Activated T-helper 1 cell treated with anti-CD3 and anti-CD28 coated beads, Interleukin-12 subunit alpha, Interleukin-12 subunit beta, Interleukin-2, Interleukin-4 antibody, amounts not matched to agents 30 ng/mL and 10 ng/mL and 1 ng/mL, durations not matched to agents 14 hours and 24 hours and 36 hours (primary cell): ENCODE measurements at regions of chr12 and their contacts with region 1.

Region 1: DNA sequence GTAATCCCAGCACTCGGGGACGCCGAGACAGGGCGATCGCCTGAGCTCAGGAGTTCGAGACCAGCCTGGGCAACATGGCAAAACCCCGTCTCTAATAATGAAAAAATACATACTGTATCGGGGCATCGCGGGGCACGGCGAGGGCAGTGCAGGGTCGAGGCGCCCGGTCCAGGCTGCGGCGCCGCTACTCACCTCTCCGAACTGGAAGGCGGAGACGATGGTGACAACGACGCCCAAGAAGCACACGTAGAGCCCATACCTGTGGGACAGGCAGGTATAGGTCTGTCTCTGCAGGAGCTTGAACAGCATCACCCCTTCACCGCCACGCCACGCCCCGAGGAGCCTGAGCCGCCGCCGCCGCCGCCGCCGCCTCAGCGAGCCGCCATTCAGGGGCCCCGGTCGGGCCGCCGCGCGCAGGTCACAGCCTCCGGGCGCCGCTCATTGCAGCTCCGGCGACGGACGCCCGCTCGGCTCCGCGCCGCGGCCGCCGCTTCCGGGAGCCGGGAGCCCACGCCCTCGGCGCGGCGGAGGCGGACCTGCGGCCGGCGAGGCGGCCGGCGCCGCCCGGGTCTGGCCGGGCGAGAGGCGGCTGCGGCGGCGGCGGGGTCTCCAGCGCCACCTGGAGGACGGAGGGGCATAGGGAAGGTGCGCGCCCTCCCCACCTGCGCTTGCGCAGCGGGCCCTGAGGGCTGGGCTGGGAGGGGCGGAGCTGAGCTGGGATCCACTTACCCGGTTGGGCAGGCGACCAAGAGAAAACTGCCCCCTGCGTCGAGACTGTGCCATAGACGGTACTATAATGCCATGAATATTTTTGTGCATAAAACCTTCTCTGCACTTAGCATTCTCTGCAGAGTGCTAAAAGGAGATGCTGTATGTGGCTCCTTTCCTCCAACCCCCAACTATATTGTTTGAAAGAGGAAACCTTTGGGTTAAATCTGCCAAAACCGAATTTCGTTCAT is at the start of gene GNPTAB:
- DNase-seq: peak; percentile 91
- H3K4me3 Mint-ChIP-seq: peak within 1 kb of the TSS; percentile 94
- H3K27ac Mint-ChIP-seq: peak within 1 kb of the TSS; percentile 84
- H3K4me1 Mint-ChIP-seq: peaks cover 40% of the 10 kb centered on the region
- H3K27me3 Mint-ChIP-seq: no peaks in the 10 kb centered on the region
- total RNA-seq, gene GNPTAB: 53.2 and 55.0 TPM in 2 replicates

Region 2: GRCh38 chr12:101407436-101408345 is 423.0 kb before region 1 on chr12 and contains the start of gene ARL1:
- intact Hi-C with region 1: loop called (anchors 2 kb)
- DNase-seq: peak; percentile 68
- H3K4me3 Mint-ChIP-seq: peak within 1 kb of the TSS; percentile 99
- H3K27ac Mint-ChIP-seq: peak within 1 kb of the TSS; percentile 95
- H3K4me1 Mint-ChIP-seq: peaks cover 25% of the 10 kb centered on the region
- H3K27me3 Mint-ChIP-seq: peaks cover 9% of the 10 kb centered on the region
- total RNA-seq, gene ARL1: 70.8 and 76.9 TPM in 2 replicates

Region 3: GRCh38 chr12:101697197-101697929 is 133.3 kb before region 1 on chr12 and contains the start of gene CHPT1:
- intact Hi-C with region 1: loop called (anchors 5 kb)
- DNase-seq: peak; percentile 34
- H3K4me3 Mint-ChIP-seq: peak within 1 kb of the TSS; percentile 88
- H3K27ac Mint-ChIP-seq: peak within 1 kb of the TSS; percentile 67
- H3K4me1 Mint-ChIP-seq: peaks cover 23% of the 10 kb centered on the region
- H3K27me3 Mint-ChIP-seq: peaks cover 33% of the 10 kb centered on the region
- total RNA-seq, gene CHPT1: 13.1 and 13.3 TPM in 2 replicates

Region 4: GRCh38 chr12:101727133-101727532 is 103.5 kb before region 1 on chr12:
- intact Hi-C with region 1: no loop called
- DNase-seq: no peak
- H3K4me3 Mint-ChIP-seq: no peak overlapping the region
- H3K27ac Mint-ChIP-seq: no peak overlapping the region
- H3K4me1 Mint-ChIP-seq: peaks cover 9% of the 10 kb centered on the region
- H3K27me3 Mint-ChIP-seq: no peaks in the 10 kb centered on the region

Region 5: DNA sequence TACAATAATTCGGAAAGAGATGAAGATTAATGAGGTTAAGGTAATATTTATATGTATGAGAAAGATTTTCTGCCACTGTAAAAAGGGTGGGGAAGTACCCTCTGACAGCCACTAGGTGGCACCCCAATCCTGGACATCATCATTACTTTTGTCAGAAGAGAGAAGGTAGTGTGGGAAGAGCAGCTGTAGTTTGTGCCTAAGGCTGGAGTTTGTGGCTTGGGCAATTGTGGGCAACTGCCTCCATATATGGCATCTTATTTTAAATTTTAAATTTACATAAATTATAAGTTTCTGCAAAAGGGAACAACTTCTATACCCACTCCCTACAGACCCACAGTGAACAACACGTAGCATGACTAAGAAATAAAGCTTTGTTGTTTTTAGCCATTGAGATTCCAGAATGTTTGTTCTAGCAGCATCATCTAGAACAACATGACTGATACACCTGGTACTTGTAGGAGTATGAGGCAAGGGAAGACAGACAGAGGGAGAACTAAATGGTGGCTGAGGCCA is 56.9 kb before region 1 on chr12:
- intact Hi-C with region 1: loop called (anchors 1 kb)
- DNase-seq: peak; percentile 47
- H3K4me3 Mint-ChIP-seq: no peak overlapping the region
- H3K27ac Mint-ChIP-seq: peak overlapping the region; percentile 42
- H3K4me1 Mint-ChIP-seq: peaks cover 41% of the 10 kb centered on the region
- H3K27me3 Mint-ChIP-seq: no peaks in the 10 kb centered on the region

Region 6: DNA sequence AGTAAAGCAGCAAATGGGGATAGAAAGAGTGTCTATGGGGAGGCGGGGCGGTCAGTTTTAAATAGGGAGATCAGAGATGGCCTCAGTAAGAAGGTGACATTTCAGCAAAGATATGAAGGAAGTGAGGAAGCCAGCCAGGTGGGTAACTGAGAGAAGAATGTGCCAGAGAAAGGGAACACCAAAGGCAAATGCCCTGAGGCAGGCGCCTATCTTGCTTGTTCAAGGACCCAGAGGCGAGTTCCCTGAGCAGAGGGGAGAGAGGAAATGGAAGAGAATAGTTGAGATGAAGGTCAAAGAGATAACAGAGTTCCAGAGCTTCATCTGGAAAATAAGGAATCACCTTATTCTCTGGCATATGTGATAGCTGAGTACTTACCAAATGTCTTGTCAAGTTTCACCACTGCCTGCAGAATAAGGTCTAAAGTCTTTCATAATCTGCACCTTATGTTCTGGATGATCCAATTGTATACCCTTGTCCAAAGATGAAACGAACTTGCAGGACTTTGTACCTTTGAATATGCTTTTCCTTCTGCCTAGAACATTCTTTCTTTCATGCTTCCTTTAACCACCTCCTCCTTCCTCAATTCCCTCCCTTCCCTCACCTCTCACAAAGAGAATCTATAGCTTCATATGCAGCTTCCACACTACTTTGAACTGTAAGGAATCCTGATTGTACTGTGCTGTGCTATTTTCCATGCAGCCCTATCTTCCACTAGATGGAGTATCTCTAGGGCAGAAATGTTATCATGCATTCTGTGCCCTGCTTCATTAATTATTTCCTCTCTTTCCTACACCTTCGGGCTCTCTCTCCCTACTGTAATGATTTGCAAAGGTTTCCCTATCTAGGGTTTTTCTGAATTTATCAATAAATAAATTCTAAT is 38.4 kb before region 1 on chr12:
- intact Hi-C with region 1: loop called (anchors 1 kb)
- DNase-seq: no peak
- H3K4me3 Mint-ChIP-seq: no peak overlapping the region
- H3K27ac Mint-ChIP-seq: peak overlapping the region; percentile 77
- H3K4me1 Mint-ChIP-seq: peaks cover 51% of the 10 kb centered on the region
- H3K27me3 Mint-ChIP-seq: no peaks in the 10 kb centered on the region

Region 7: GRCh38 chr12:101799774-101800173 is 30.9 kb before region 1 on chr12:
- intact Hi-C with region 1: loop called (anchors 1 kb)
- DNase-seq: no peak
- H3K4me3 Mint-ChIP-seq: peak overlapping the region; percentile 1
- H3K27ac Mint-ChIP-seq: peak overlapping the region; percentile 55
- H3K4me1 Mint-ChIP-seq: peaks cover 54% of the 10 kb centered on the region
- H3K27me3 Mint-ChIP-seq: no peaks in the 10 kb centered on the region

Region 8: DNA sequence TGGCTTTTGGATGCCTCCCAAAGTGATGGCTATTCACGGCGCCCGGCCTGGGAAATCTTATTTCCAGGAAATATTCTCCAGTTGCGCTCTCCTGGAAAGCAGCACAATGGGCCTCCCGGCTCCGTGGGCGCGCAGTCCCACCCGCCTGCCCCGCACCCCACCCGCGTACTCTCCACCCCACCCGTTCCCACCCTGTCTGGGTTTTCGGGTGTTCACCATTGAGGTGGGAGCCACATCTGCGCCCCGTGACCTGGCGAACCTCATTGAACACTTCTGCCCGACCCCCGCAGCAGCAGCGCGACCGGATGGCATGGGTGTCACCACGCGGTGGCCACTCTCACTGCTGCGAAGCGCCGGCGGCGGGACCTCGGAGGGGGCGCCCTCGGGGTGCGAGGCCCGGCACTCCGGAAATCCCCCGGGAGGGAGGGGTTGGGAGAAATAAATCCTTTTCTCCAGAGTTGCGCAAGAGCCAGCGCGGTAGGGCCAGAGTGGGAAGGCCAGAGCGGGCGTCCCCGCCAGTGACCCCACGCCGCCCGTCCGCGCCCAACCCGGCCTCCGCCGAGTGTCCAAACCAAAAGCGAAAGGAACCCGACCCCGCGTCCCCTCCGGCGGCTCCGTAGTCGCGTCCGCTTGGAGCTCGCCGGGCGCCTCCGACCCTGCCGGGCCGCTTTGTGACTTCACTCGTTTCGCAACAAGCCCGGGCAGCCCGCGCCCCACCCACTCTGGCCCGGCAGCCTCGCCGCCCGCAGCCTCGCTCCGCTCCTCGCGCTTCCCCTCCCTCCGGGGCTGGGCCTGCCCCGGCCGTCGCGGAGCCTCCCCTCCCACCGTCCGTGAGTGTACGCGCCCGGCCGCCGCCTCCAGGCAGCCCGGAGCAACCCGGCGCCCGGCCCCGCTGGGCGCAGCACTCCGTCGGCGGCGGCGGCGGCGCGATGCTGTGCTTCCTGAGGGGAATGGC is 46.5 kb after region 1 on chr12 and contains the start of gene DRAM1:
- intact Hi-C with region 1: loop called (anchors 1 kb)
- DNase-seq: peak; percentile 78
- H3K4me3 Mint-ChIP-seq: peak within 1 kb of the TSS; percentile 90
- H3K27ac Mint-ChIP-seq: peak within 1 kb of the TSS; percentile 83
- H3K4me1 Mint-ChIP-seq: peaks cover 12% of the 10 kb centered on the region
- H3K27me3 Mint-ChIP-seq: no peaks in the 10 kb centered on the region
- total RNA-seq, gene DRAM1: 3.2 and 4.1 TPM in 2 replicates